HEK293T (cell line): ENCODE measurements at regions of chr16 and their contacts with region 1.

Region 1: DNA sequence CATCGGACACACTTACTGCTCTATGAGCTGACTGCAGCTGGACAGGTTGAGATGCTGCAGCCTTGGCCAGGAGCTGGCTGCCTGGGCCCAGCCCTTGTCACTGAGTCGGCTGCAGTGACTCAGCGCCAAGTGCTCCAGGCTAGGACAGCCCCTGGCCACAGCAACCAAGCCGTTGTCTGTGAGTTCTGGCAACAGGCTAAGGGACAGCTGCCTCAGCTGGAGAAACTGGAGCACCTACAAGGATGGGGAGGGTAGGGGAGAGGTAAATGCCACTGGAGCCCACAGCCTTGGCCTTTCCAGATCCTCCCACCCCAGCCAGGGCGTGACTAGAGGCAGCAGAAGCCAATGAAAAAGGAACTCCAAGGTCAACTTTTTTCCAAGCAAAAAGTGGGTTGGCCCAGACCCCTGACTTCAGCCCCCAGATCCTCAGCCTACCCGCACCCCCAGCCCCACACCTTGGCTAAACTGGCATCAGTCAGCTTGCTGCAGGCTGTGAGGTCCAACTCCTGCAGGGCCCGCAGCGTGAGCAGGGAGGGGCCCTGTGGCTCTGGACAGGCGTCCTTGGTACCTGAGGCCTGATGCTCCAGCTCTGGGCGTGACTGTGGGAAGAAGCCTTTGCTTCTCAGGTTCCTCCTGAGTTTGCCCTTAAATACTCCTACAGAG is 9.1 kb downstream of the ELMO3 start:
- DNase-seq: no peak

Region 2: GRCh38 chr16:67226804-67227557 is 19.0 kb after region 1 on chr16 and contains the start of gene TMEM208:
- CTCF ChIA-PET with region 1: no interaction called
- POLR2A ChIA-PET with region 1: interaction called, 10 read pairs
- DNase-seq: peak; percentile 98